ENCODE measurements at regions of chr1 and their contacts with region 1.

Region 1: GRCh38 chr1:118949315-118949714 is 38.8 kb downstream of the TBX15 start:
- DNase-seq: peak; percentile 83 to 87
- ATAC-seq: peak; percentile 50 to 72
- H3K4me3 ChIP-seq: no peak overlapping the region
- H3K27ac ChIP-seq: peak overlapping the region; percentile 83 to 93 (median 88)
- H3K4me1 ChIP-seq: peaks cover 92 to 97% of the 10 kb centered on the region in 2 donors
- H3K27me3 ChIP-seq: no peaks in the 10 kb centered on the region
- CTCF ChIP-seq: no peak
- POLR2A ChIP-seq: peak in 1 of 2 donors; percentile 31

Region 2: DNA sequence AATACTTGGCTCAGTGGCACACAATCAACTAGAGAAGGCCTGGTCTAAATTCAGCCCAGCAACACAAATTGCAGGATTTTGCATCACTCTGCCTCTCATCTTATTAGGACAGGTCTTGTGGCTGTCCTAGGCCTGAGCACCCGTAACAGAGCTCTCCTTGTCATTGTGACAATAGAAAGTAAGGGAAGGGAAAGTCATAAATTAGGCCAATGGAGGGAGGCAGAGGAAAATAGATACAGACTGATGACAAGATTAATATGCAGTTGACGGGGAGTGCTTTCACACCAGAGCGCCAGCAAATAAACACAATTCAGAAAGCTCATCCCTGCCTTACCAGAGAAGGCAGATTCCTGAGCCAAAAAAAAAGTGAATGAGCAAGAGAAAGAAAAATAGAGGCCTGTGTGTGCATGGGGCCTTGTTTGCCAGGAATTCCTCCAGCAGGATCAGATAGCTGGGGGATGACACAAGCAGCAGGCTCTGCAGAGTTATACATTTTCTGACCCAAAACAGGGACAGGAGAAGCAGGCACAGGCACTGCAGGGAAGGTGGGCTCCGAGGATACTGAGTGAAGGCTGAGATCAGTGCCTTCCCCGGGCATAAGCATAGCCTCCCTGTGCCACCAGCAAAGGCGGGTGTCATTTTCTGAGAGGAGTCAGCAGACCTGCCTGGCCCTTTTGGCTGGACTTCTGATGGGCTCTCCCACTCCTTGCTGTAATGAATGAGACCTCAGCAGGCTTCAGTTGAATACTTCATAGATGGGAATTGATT is 654.3 kb before region 1 on chr1:
- in situ Hi-C with region 1: loop called in 1 of 4 experiments (anchors 25 kb)
- intact Hi-C with region 1: loop called (anchors 2 kb)
- DNase-seq: peak; percentile 31 to 77
- ATAC-seq: peak; percentile 0 to 32
- H3K4me3 ChIP-seq: no peak overlapping the region
- H3K27ac ChIP-seq: peak overlapping the region; percentile 84 to 99 (median 89)
- H3K4me1 ChIP-seq: peaks cover 82% of the 10 kb centered on the region in 2 donors
- H3K27me3 ChIP-seq: no peaks in the 10 kb centered on the region
- CTCF ChIP-seq: no peak
- POLR2A ChIP-seq: no peak